Tibial artery (tissue), 4 donors: ENCODE measurements at regions of chr4 and their contacts with region 1.

Region 1: GRCh38 chr4:76305971-76306881 is at the start of gene STBD1:
- DNase-seq: peak; percentile 87 to 93
- H3K4me3 ChIP-seq: peak within 1 kb of the TSS; percentile 76 to 85
- H3K27ac ChIP-seq: peak within 1 kb of the TSS; percentile 91 to 97
- H3K4me1 ChIP-seq: peaks cover 0 to 38% (median 30%) of the 10 kb centered on the region in 4 donors
- H3K27me3 ChIP-seq: no peaks in the 10 kb centered on the region
- CTCF ChIP-seq: no peak

Region 2: DNA sequence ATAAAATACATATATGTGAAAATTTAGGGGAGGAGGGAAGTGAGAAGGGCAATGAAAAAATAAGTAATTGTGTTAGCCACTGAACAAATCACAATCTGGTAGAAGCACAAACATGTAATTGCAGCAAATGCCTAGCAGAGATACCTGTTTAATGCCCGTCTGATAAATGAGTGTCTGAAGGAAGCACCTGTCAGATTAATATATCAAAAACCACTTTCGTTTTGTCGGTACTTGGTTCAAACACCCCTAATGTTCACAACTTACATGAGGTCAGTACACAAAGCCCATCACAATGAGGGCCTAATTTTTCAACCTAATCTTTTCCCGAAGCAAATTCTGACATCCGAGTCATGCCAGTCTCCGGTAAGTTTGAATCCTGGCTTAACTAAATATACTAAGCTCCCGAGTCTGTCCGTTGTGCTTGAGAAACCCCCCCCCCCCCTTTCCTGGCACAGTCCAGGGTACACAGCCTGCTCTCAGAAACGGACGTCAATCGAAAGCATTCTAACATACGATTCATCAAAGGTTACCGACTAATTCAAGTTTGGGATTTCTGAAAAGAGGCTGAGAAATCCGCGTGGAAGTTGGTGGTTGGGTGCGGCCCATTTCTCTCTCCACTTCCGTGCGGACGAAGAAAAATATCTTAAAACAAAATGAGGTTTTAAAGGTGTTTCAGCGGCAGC is 316.2 kb before region 1 on chr4:
- intact Hi-C with region 1: loop called (anchors 5 kb)
- DNase-seq: no peak
- H3K4me3 ChIP-seq: peak overlapping the region; percentile 88 to 92
- H3K27ac ChIP-seq: peak overlapping the region; percentile 72 to 77
- H3K4me1 ChIP-seq: peaks cover 0 to 29% (median 16%) of the 10 kb centered on the region in 4 donors
- H3K27me3 ChIP-seq: no peaks in the 10 kb centered on the region
- CTCF ChIP-seq: no peak

Region 3: DNA sequence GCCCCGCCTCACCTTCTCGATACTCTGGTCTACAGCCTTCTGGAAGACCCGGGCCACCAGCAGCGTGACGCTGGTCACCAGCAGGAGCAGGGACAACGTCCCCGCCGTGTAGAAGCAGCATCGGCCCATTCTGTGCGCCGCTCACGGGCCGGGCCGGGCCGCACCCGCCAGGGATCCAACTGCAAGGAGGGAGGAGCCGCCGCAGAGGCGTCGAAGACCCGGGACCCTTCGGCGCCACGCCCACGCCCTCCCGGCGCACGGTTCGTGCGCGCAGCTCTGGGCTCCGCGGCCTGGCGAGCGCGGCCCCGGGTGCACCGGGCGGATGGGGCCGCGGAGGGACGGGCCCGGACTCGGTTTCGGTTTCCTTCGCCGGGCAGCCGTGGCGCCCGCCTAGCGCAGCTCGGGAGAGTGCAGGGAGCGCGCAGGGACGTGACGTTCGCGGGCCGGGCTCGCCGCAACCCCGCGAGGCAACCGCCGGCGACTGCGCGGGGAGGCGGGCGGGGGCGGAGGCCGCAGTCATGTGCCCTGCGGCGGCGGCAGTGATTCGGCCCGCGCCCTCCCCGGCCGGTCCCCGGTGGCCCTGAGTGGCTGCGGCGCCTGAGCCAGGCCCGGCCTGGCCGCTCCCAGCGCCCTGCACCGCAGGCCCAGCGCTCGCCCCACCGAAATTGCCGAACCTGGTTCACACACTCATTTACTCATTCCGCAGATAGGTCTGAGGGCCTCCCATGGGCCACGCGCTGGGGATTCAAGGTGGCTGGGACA is 92.6 kb before region 1 on chr4 and contains the start of gene SCARB2:
- intact Hi-C with region 1: loop called (anchors 2 kb)
- DNase-seq: peak; percentile 84 to 94
- H3K4me3 ChIP-seq: peak within 1 kb of the TSS; percentile 88 to 89
- H3K27ac ChIP-seq: peak within 1 kb of the TSS; percentile 98 to 99
- H3K4me1 ChIP-seq: peaks cover 0 to 58% (median 48%) of the 10 kb centered on the region in 4 donors
- H3K27me3 ChIP-seq: no peaks in the 10 kb centered on the region
- CTCF ChIP-seq: peak in 1 of 2 experiments; percentile 31

Region 4: GRCh38 chr4:76354517-76355473 is 48.6 kb after region 1 on chr4:
- intact Hi-C with region 1: no loop called
- DNase-seq: no peak
- H3K4me3 ChIP-seq: no peak overlapping the region
- H3K27ac ChIP-seq: no peak overlapping the region
- H3K4me1 ChIP-seq: peaks cover 0 to 5% (median 0%) of the 10 kb centered on the region in 4 donors
- H3K27me3 ChIP-seq: no peaks in the 10 kb centered on the region
- CTCF ChIP-seq: no peak

Region 5: GRCh38 chr4:77862478-77863216 is 1556.4 kb after region 1 on chr4 and contains the start of gene MRPL1:
- intact Hi-C with region 1: loop called (anchors 5 kb)
- DNase-seq: peak; percentile 89 to 93
- H3K4me3 ChIP-seq: peak within 1 kb of the TSS; percentile 65 to 66
- H3K27ac ChIP-seq: peak within 1 kb of the TSS; percentile 89 to 93
- H3K4me1 ChIP-seq: peaks cover 0 to 19% (median 5%) of the 10 kb centered on the region in 4 donors
- H3K27me3 ChIP-seq: no peaks in the 10 kb centered on the region
- CTCF ChIP-seq: peak; percentile 1 to 13